Psoas muscle (tissue), 8 donors: ENCODE measurements at regions of chr3 and their contacts with region 1.

Region 1: DNA sequence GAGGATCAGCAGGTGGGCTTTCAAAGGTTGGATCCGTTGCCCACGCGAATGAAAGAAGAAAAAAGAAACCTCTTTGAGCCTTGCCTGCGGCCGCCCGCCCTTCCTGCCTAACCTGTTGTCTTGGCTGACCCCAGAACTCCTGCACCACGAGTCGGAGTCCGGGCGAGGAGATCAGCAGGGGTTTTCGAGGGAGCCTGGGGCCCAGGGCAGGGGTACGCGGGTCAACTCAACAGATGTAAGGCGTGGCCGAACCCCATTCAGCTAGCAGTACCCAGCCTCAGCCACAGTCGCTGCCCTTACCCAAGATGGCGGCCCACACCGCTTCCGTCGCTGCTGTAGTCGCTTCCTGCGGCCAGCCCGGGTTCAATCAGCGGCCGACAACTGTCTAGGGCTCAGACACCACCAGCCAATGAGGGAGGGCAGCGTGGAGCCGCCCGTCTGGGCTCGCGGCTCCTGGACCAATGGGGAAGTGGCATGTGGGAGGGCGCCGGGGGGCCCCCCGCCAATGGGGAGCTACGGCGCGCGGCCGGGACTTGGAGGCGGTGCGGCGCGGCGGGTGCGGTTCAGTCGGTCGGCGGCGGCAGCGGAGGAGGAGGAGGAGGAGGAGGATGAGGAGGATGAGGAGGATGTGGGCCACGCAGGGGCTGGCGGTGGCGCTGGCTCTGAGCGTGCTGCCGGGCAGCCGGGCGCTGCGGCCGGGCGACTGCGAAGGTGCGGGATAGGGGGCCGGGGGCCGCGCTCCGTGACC is at the start of gene MANF:
- DNase-seq: peak; percentile 98 to 99
- ATAC-seq: peak; percentile 98 to 99 (median 99)
- H3K4me3 ChIP-seq: peak within 1 kb of the TSS; percentile 70
- H3K27ac ChIP-seq: peak within 1 kb of the TSS; percentile 86
- H3K4me1 ChIP-seq: peaks cover 23% of the 10 kb centered on the region
- H3K27me3 ChIP-seq: no peaks in the 10 kb centered on the region
- CTCF ChIP-seq: no peak
- total RNA-seq, gene MANF: 12.6 to 24.0 (median 19.3) TPM

Region 2: GRCh38 chr3:51670823-51671733 is 286.2 kb after region 1 on chr3 and contains the start of gene TEX264:
- intact Hi-C with region 1: loop called (anchors 5 to 10 kb)
- DNase-seq: peak; percentile 93 to 95
- ATAC-seq: peak; percentile 88 to 92 (median 90)
- H3K4me3 ChIP-seq: peak within 1 kb of the TSS; percentile 89
- H3K27ac ChIP-seq: peak within 1 kb of the TSS; percentile 82
- H3K4me1 ChIP-seq: peaks cover 23% of the 10 kb centered on the region
- H3K27me3 ChIP-seq: no peaks in the 10 kb centered on the region
- CTCF ChIP-seq: no peak
- total RNA-seq, gene TEX264: 16.8 to 29.6 (median 21.9) TPM